AG04449 (cell line): ENCODE measurements at regions of chr7 and their contacts with region 1.

Region 1: DNA sequence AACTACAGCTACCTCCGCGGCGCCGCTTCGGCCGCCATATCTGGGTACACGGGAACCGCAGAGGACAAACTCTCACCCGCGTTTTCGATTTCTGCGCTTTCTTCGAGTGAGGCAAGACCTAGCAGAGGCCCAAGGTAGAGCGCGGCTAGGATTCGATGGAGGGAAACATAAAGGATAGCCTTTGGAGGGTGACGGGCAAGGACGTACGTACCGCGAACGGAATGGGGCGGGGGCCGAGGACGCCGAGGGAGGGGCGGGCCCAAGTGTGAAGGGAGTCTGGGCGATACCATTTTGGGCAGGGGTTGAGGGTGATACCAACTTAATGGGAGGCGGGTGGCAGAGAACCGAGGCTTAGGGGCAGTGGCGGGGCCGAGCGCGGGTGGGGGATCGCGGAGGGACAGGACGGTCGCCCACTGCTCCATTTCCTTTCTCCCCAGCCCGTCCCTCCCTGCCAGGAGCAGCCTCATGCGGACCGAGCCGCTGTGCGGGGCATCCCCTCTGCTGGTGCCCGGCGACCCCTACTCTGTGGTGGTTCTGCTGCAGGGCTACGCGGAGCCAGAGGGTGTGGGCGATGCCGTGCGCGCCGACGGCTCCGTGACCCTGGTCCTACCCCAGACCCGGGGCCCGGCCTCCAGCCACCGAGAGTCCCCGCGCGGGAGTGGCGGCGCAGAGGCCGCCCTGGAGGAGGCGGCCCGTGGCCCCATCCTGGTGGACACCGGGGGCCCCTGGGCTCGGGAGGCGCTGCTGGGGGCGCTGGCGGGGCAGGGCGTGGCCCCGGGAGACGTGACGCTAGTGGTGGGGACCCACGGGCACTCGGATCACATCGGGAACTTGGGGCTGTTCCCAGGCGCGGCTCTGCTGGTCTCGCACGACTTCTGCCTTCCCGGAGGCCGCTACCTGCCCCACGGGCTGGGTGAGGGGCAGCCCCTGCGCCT is at the start of gene MBLAC1:
- DNase-seq: peak; percentile 63
- H3K4me3 ChIP-seq: peak within 1 kb of the TSS; percentile 94
- CTCF ChIP-seq: no peak

Region 2: GRCh38 chr7:100148559-100149350 is 21.6 kb after region 1 on chr7 and contains the start of gene LAMTOR4:
- CTCF ChIA-PET with region 1: interaction called, 167 read pairs
- POLR2A ChIA-PET with region 1: interaction called, 8 read pairs
- DNase-seq: peak; percentile 94
- H3K4me3 ChIP-seq: peak within 1 kb of the TSS; percentile 100
- CTCF ChIP-seq: no peak

Region 3: DNA sequence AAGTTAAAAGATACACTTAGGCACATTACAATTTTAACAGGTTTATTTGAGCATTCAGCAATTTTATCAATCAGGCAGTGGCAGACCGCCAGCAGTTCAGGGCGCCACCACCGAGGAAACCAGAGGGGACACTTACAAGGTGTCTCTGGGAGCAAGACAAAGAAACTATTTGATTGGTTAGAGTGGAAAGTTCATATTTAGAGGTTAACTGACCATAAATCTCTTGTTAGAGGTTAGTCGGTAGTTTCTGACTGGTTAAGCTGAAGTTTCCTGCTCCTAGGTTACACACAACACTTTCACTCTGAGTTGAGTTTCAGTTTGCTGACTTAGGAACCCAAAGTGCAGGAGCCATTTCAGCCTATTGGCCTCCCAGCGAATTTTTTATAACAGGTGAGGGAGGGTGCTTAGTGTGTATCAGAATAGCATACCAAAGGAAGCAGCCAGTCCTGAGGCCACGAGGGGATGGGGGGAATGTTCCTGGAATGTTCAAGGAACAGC is 81.8 kb after region 1 on chr7:
- CTCF ChIA-PET with region 1: interaction called, 298 read pairs
- POLR2A ChIA-PET with region 1: no interaction called
- DNase-seq: no peak
- H3K4me3 ChIP-seq: no peak overlapping the region
- CTCF ChIP-seq: no peak